GM12878 (cell line): ENCODE measurements at regions of chr2 and their contacts with region 1.

Region 1: GRCh38 chr2:138475277-138475776 is 26.2 kb upstream of the SPOPL start:
- DNase-seq: peak; percentile 53
- ATAC-seq: peak; percentile 92
- H3K4me3 ChIP-seq: no peak overlapping the region
- H3K27ac ChIP-seq: peak overlapping the region; percentile 61
- H3K4me1 ChIP-seq: peaks cover 21% of the 10 kb centered on the region
- H3K27me3 ChIP-seq: no peaks in the 10 kb centered on the region
- CTCF ChIP-seq: no peak
- EP300 ChIP-seq: no peak
- POLR2A ChIP-seq: no peak
- RAD21 ChIP-seq: no peak

Region 2: DNA sequence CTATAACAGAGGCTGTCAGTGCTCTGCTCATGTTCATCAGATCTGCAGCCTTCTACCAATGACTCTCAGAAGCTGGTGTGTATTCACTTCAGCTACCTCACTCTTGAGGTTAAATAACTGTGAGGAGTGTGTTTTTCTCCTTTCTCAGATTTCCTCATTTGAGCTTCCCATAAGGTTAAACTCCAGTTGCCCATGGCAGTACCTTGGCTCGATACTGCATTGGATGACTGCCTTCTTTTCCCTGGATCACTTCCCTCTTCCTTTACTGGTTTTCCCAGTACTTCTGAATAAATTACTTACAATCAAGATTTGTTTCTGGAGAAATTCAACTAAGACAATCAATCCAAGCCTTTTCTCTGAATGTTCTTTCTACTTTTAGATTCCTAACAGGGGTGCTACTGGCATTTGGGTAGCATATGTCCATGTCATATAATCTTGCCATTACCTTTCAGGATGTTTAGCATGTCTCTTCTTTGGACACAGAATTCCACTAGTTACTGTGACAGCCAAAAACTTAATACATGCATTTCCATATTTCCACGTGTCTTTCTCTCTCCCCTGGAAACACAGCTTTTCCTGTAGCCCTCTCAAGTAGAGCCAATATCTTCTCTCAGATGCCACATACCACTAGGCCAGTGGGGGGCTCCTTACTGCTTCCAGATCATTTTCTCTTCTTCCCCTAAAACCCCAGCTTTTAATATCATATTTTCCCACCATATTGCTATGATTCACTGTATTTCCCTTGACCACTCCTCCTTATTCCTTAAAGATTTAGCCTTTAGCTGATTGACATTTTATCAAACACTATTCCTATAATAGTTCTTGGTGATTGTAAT is 11.3 kb after region 1 on chr2:
- CTCF ChIA-PET with region 1: interaction called, 7 read pairs
- POLR2A ChIA-PET with region 1: interaction called, 3 read pairs
- RAD21 ChIA-PET with region 1: interaction called, 4 read pairs
- SMC1A ChIA-PET with region 1: interaction called, 11 read pairs
- in situ Hi-C with region 1: no loop called
- intact Hi-C with region 1: no loop called
- DNase-seq: no peak
- ATAC-seq: peak; percentile 48; the same call in 2 of the 3 replicates
- H3K4me3 ChIP-seq: no peak overlapping the region
- H3K27ac ChIP-seq: no peak overlapping the region
- H3K4me1 ChIP-seq: no peaks in the 10 kb centered on the region
- H3K27me3 ChIP-seq: no peaks in the 10 kb centered on the region
- CTCF ChIP-seq: peak; percentile 19 to 21 (median 21); a peak in 4 of 6 replicates
- EP300 ChIP-seq: no peak
- POLR2A ChIP-seq: no peak
- RAD21 ChIP-seq: peak; percentile 31; the same call in 1 of the 2 replicates

Region 3: GRCh38 chr2:138712212-138712979 is 237.1 kb after region 1 on chr2:
- CTCF ChIA-PET with region 1: interaction called, 30 read pairs
- POLR2A ChIA-PET with region 1: no interaction called
- RAD21 ChIA-PET with region 1: interaction called, 5 read pairs
- SMC1A ChIA-PET with region 1: interaction called, 3 read pairs
- in situ Hi-C with region 1: no loop called
- intact Hi-C with region 1: no loop called
- DNase-seq: peak; percentile 61
- ATAC-seq: peak; percentile 93
- H3K4me3 ChIP-seq: no peak overlapping the region
- H3K27ac ChIP-seq: no peak overlapping the region
- H3K4me1 ChIP-seq: peaks cover 14% of the 10 kb centered on the region; the same call in 1 of the 2 replicates
- H3K27me3 ChIP-seq: no peaks in the 10 kb centered on the region; a peak in 1 of 4 replicates
- CTCF ChIP-seq: no peak
- EP300 ChIP-seq: peak; percentile 49 to 74; a peak in 2 of 4 replicates
- POLR2A ChIP-seq: no peak
- RAD21 ChIP-seq: no peak